Mammary epithelial cell (primary cell): ENCODE measurements at regions of chr5 and their contacts with region 1.

Region 1: DNA sequence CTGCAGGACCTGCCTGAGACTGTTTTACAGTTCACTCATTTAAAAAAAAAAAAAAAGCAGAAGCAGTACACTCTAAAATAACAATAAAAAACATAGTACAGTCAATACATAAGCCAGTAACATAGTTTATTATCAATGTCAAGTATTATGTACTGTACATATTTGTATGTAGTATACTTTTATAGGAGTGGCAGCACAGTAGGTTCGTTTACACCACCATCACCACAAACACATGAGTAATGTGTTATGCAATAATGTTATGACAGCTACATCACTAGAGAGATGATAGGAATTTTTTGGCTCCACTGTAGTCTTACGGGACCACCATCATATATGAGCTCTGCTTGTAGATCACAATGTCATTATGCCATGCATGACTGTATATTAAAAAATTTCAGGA is 462.8 kb downstream of the ISL1 start:
- DNase-seq: peak; percentile 33
- H3K4me3 ChIP-seq: no peak overlapping the region
- H3K27ac ChIP-seq: no peak overlapping the region
- H3K4me1 ChIP-seq: no peaks in the 10 kb centered on the region
- H3K27me3 ChIP-seq: no peaks in the 10 kb centered on the region
- CTCF ChIP-seq: no peak

Region 2: GRCh38 chr5:51495672-51496071 is 350.3 kb before region 1 on chr5:
- CTCF ChIA-PET with region 1: no interaction called
- dilution Hi-C with region 1: no loop called
- in situ Hi-C with region 1: no loop called
- intact Hi-C with region 1: loop called (anchors 1 kb)
- DNase-seq: peak; percentile 77
- H3K4me3 ChIP-seq: no peak overlapping the region
- H3K27ac ChIP-seq: no peak overlapping the region
- H3K4me1 ChIP-seq: peaks cover 18% of the 10 kb centered on the region
- H3K27me3 ChIP-seq: no peaks in the 10 kb centered on the region
- CTCF ChIP-seq: no peak

Region 3: DNA sequence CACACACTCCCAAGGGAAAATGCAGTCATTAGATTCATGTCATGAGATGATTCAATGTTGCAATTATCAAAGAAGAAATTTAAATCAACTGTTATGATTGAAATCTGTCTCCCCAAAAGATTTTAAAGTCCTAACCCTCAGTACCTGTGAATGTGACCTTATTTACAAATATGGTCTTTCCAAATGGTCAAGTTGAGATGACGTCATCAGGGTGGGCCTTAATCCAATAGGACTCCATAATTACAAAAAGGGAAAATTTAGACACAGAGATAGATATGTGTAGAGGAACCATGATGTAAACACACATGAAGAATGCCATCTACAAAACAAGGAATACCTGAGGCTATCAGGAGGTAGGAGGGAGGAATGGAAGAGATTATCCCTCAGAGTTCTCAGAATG is 241.7 kb before region 1 on chr5:
- CTCF ChIA-PET with region 1: no interaction called
- dilution Hi-C with region 1: no loop called
- in situ Hi-C with region 1: no loop called
- intact Hi-C with region 1: loop called (anchors 10 kb)
- DNase-seq: no peak
- H3K4me3 ChIP-seq: no peak overlapping the region
- H3K27ac ChIP-seq: no peak overlapping the region
- H3K4me1 ChIP-seq: no peaks in the 10 kb centered on the region
- H3K27me3 ChIP-seq: peaks cover 2% of the 10 kb centered on the region
- CTCF ChIP-seq: no peak

Region 4: GRCh38 chr5:51657340-51658240 is 188.4 kb before region 1 on chr5:
- CTCF ChIA-PET with region 1: no interaction called
- dilution Hi-C with region 1: no loop called
- in situ Hi-C with region 1: no loop called
- intact Hi-C with region 1: no loop called
- DNase-seq: peak; percentile 12
- H3K4me3 ChIP-seq: no peak overlapping the region
- H3K27ac ChIP-seq: no peak overlapping the region
- H3K4me1 ChIP-seq: peaks cover 9% of the 10 kb centered on the region
- H3K27me3 ChIP-seq: no peaks in the 10 kb centered on the region
- CTCF ChIP-seq: no peak

Region 5: GRCh38 chr5:51684794-51685355 is 161.1 kb before region 1 on chr5:
- CTCF ChIA-PET with region 1: interaction called, 3 read pairs
- dilution Hi-C with region 1: no loop called
- in situ Hi-C with region 1: no loop called
- intact Hi-C with region 1: loop called (anchors 1 kb)
- DNase-seq: no peak
- H3K4me3 ChIP-seq: no peak overlapping the region
- H3K27ac ChIP-seq: no peak overlapping the region
- H3K4me1 ChIP-seq: no peaks in the 10 kb centered on the region
- H3K27me3 ChIP-seq: no peaks in the 10 kb centered on the region
- CTCF ChIP-seq: peak; percentile 43 to 63

Region 6: GRCh38 chr5:51746023-51746422 is 100.0 kb before region 1 on chr5:
- CTCF ChIA-PET with region 1: no interaction called
- dilution Hi-C with region 1: no loop called
- in situ Hi-C with region 1: no loop called
- intact Hi-C with region 1: no loop called
- DNase-seq: no peak
- H3K4me3 ChIP-seq: no peak overlapping the region
- H3K27ac ChIP-seq: no peak overlapping the region
- H3K4me1 ChIP-seq: no peaks in the 10 kb centered on the region
- H3K27me3 ChIP-seq: no peaks in the 10 kb centered on the region
- CTCF ChIP-seq: no peak